Left lung (tissue), 14 donors: ENCODE measurements at regions of chr3 and their contacts with region 1.

Region 1: DNA sequence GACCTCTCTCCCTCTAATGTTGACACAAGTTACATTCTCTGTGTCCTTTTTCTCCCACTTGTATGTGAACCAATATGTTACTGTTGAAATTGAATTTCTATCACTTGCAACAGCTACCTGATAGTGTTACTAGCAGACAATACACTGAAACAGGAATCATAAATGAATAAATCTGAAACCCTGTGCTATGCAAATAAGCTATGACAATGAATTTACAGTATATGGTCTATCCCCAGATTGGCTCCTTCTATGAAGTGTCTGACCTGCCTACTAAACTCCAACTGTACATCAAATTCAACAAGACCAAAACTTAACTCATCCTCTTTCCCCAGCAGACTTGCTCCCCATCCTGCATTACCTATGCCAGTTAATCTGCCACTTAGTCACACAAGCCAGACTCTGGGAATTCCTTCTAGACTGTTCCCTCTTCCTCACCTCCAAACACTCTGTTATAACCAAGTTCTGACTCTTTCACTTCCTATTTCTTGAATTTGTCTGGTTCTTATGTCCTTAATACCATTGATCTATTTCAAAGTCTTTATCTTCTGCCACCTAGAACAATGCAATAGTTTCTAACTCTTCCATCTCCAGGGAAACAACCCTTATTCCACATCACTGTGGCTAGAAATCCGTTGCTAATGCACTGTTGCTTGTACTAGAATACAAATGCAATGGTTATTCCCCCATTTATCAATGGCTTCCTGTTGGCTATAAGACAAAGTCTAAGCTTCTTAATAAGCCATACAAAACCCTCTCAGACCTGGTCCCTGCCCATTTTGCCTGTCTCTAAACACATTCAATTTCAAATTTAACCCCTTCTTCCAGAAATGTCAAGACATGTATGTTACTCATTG is 13.4 kb upstream of the ZNF639 start:
- DNase-seq: no peak
- ATAC-seq: no peak
- H3K4me3 ChIP-seq: no peak overlapping the region
- H3K27ac ChIP-seq: no peak overlapping the region
- H3K4me1 ChIP-seq: no peaks in the 10 kb centered on the region
- H3K27me3 ChIP-seq: no peaks in the 10 kb centered on the region
- CTCF ChIP-seq: no peak

Region 2: GRCh38 chr3:178359728-178360127 is 949.7 kb before region 1 on chr3:
- intact Hi-C with region 1: no loop called
- DNase-seq: no peak
- ATAC-seq: no peak
- H3K4me3 ChIP-seq: no peak overlapping the region
- H3K27ac ChIP-seq: peak overlapping the region in 1 of 2 donors; percentile 42
- H3K4me1 ChIP-seq: peaks cover 0 to 4% of the 10 kb centered on the region in 2 donors
- H3K27me3 ChIP-seq: no peaks in the 10 kb centered on the region
- CTCF ChIP-seq: no peak

Region 3: GRCh38 chr3:179015551-179016020 is 293.9 kb before region 1 on chr3:
- intact Hi-C with region 1: loop called in 1 of 2 experiments (anchors 10 kb)
- DNase-seq: peak in 2 of 4 donors; percentile 65 to 77
- ATAC-seq: peak; percentile 98
- H3K4me3 ChIP-seq: no peak overlapping the region
- H3K27ac ChIP-seq: no peak overlapping the region
- H3K4me1 ChIP-seq: no peaks in the 10 kb centered on the region
- H3K27me3 ChIP-seq: no peaks in the 10 kb centered on the region
- CTCF ChIP-seq: peak; percentile 75 to 78

Region 4: DNA sequence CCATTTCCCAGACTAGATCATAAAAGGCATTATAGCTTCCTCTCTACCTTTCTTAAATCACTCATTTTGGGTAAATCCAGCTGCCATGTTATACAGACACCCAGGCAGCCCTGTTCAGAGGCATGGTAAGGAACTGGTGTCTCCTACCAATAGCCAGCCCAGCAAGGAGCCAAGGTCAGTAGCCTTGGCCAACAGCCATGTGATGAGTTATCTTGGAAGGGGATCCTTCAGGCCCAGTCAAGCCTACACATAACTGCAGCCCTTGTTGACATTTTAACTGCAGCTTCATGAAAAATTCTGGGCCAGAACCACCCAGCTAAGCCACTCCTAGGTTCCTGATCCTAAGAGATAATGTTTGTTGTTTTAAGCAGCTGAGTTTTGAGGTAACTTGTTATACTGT is 208.8 kb before region 1 on chr3:
- intact Hi-C with region 1: loop called in 1 of 2 experiments (anchors 10 kb)
- DNase-seq: no peak
- ATAC-seq: no peak
- H3K4me3 ChIP-seq: no peak overlapping the region
- H3K27ac ChIP-seq: no peak overlapping the region
- H3K4me1 ChIP-seq: no peaks in the 10 kb centered on the region
- H3K27me3 ChIP-seq: no peaks in the 10 kb centered on the region
- CTCF ChIP-seq: no peak

Region 5: DNA sequence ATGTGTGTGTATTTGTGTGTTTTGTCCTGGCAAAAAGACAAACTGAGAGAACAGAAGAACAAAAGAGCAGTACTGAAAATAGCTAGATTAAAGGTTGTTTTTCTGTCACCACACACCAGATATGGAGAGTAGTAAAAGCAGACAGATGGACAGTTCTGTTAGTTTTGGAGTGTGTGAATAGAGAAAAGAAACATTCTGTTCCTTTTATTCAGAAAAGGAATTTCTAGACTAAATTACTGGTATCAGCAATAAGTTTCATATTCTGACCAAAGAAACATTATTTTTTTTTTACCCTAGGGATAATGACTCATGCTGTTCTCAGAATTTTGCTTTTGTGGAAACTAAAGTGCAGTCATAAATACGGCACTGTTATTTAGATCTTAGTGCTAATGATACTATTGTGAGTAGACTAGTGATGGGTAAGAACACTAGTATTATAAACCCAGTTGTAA is 128.4 kb before region 1 on chr3:
- intact Hi-C with region 1: no loop called
- DNase-seq: no peak
- ATAC-seq: peak; percentile 66
- H3K4me3 ChIP-seq: no peak overlapping the region
- H3K27ac ChIP-seq: peak overlapping the region; percentile 6 to 74
- H3K4me1 ChIP-seq: peaks cover 0 to 38% of the 10 kb centered on the region in 2 donors
- H3K27me3 ChIP-seq: no peaks in the 10 kb centered on the region
- CTCF ChIP-seq: no peak